CD4-positive, alpha-beta memory T cell (primary cell): ENCODE measurements at regions of chr9 and their contacts with region 1.

Region 1: DNA sequence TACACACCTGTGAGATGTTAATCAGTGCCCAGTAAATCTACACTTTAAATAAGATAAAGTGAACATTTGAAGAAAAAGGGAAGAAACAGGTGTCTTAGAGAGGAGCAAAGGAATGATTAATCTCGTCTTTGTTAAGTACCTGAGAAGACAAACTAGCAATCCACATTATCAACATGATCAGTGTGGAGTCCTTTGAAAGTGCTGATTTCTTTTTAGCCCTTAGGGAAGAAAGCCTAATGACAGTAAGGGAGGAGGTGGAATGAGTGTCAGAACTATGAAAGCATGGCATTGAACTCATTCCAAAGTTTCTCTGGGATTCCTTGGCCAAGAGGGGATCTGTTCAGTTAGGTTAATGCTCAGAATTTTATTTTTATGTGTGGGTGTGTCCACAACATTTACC is 1109.0 kb upstream of the ACO1 start:
- DNase-seq: no peak
- H3K4me3 ChIP-seq: no peak overlapping the region
- H3K4me3 Mint-ChIP-seq: no peak overlapping the region
- H3K27ac ChIP-seq: no peak overlapping the region
- H3K27ac Mint-ChIP-seq: no peak overlapping the region
- H3K4me1 ChIP-seq: peaks cover 14% of the 10 kb centered on the region
- H3K4me1 Mint-ChIP-seq: peaks cover 18 to 28% (median 24%) of the 10 kb centered on the region in 4 donors
- H3K27me3 ChIP-seq: no peaks in the 10 kb centered on the region
- H3K27me3 Mint-ChIP-seq: peaks cover 0 to 1% of the 10 kb centered on the region in 2 donors

Region 2: DNA sequence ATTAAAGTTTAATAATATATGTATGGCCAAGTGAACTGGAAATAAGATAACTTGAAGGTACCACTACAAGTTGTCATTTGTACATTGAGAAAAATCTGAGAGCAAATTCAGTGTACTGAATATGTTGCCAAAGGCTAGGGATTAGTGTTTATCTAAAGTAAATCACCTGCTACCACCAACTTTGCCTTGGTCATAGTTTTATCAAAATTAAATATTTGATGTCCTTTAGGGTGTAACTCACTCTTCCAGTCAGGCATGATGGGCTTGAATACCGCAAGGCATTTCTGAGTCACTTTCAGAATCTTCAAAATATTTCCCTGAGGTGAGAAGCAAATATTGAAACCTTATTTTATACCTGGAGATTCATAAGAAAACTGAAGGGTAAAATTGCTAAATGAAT is 229.6 kb before region 1 on chr9:
- CTCF ChIA-PET with region 1: no interaction called
- POLR2A ChIA-PET with region 1: no interaction called
- intact Hi-C with region 1: no loop called
- DNase-seq: no peak
- H3K4me3 ChIP-seq: no peak overlapping the region
- H3K4me3 Mint-ChIP-seq: no peak overlapping the region
- H3K27ac ChIP-seq: no peak overlapping the region
- H3K27ac Mint-ChIP-seq: no peak overlapping the region
- H3K4me1 ChIP-seq: no peaks in the 10 kb centered on the region
- H3K4me1 Mint-ChIP-seq: peaks cover 0 to 2% (median 0%) of the 10 kb centered on the region in 4 donors
- H3K27me3 ChIP-seq: no peaks in the 10 kb centered on the region
- H3K27me3 Mint-ChIP-seq: peaks cover 0 to 3% of the 10 kb centered on the region in 2 donors

Region 3: GRCh38 chr9:31236344-31236743 is 39.1 kb before region 1 on chr9:
- CTCF ChIA-PET with region 1: no interaction called
- POLR2A ChIA-PET with region 1: no interaction called
- intact Hi-C with region 1: loop called (anchors 5 kb)
- DNase-seq: no peak
- H3K4me3 ChIP-seq: no peak overlapping the region
- H3K4me3 Mint-ChIP-seq: no peak overlapping the region
- H3K27ac ChIP-seq: no peak overlapping the region
- H3K27ac Mint-ChIP-seq: no peak overlapping the region
- H3K4me1 ChIP-seq: peaks cover 14% of the 10 kb centered on the region
- H3K4me1 Mint-ChIP-seq: peaks cover 10 to 23% (median 13%) of the 10 kb centered on the region in 4 donors
- H3K27me3 ChIP-seq: no peaks in the 10 kb centered on the region
- H3K27me3 Mint-ChIP-seq: no peaks in the 10 kb centered on the region

Region 4: GRCh38 chr9:31259824-31260223 is 15.6 kb before region 1 on chr9:
- CTCF ChIA-PET with region 1: interaction called, 3 read pairs
- POLR2A ChIA-PET with region 1: no interaction called
- intact Hi-C with region 1: loop called (anchors 2 kb)
- DNase-seq: peak in 4 of 5 donors; percentile 54 to 76 (median 65)
- H3K4me3 ChIP-seq: no peak overlapping the region
- H3K4me3 Mint-ChIP-seq: peak overlapping the region; percentile 19 to 70 (median 54)
- H3K27ac ChIP-seq: no peak overlapping the region
- H3K27ac Mint-ChIP-seq: peak overlapping the region in 6 of 7 donors; percentile 5 to 84 (median 39)
- H3K4me1 ChIP-seq: peaks cover 20% of the 10 kb centered on the region
- H3K4me1 Mint-ChIP-seq: peaks cover 11 to 13% (median 12%) of the 10 kb centered on the region in 4 donors
- H3K27me3 ChIP-seq: no peaks in the 10 kb centered on the region
- H3K27me3 Mint-ChIP-seq: no peaks in the 10 kb centered on the region